Activated CD4-positive, alpha-beta memory T cell treated with anti-CD3 and anti-CD28 coated beads for 36 hours (primary cell): ENCODE measurements at regions of chr5 and their contacts with region 1.

Region 1: DNA sequence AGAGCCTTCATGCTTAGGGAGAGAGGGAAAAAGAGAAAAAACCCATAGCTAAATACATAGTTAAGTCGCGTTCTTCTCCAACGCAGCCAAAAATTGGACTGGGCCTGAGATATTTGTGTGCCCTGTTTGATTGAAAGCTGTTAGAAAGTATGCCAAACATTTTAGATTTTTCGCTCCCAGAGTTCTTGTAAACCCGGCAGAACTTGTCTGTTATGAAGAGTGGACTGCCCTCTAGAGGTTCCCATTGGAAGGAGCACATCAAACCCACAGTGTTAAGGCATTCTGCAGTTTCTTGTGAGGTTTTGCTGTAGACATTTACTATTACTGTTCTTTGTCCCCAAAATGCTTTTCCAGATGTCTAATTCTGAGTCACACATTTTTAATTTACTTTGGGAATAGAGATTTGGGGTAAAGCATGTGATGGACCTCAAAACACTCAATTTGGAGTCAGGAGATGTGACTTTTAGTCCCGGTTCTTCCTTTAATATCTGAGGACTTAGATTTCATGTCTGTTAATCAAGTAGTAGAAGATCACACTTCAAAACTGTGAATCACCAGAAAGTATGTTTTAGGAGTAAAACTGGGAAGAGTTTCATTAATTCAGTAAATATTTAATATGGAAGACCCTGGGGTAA is 96.6 kb downstream of the PCSK1 start:
- DNase-seq: peak; percentile 67
- H3K4me3 Mint-ChIP-seq: no peak overlapping the region
- H3K27ac Mint-ChIP-seq: no peak overlapping the region
- H3K4me1 Mint-ChIP-seq: peaks cover 11% of the 10 kb centered on the region
- H3K27me3 Mint-ChIP-seq: peaks cover 19% of the 10 kb centered on the region

Region 2: DNA sequence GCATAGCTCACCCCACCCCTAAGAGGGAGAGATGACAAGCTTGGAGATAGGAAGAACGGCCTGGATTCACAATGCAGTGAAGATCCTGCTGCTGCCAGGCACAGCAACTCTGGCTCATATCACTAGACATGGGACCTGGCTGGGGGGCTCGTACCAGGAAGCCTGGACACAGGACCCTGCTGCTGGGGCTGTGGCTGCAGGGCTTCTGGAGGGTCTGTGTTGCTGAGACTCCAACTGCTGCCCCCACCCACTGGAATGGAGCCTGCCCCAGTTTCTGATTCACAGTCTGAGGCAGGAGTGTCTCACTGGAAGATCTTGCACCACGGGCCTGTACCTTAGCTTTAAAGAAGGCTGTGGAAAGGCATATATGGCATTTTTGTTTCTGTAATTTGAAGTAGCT is 483.0 kb before region 1 on chr5:
- CTCF ChIA-PET with region 1: interaction called, 63 read pairs
- POLR2A ChIA-PET with region 1: no interaction called
- intact Hi-C with region 1: no loop called
- DNase-seq: no peak
- H3K4me3 Mint-ChIP-seq: no peak overlapping the region
- H3K27ac Mint-ChIP-seq: no peak overlapping the region
- H3K4me1 Mint-ChIP-seq: peaks cover 7% of the 10 kb centered on the region
- H3K27me3 Mint-ChIP-seq: peaks cover 2% of the 10 kb centered on the region

Region 3: GRCh38 chr5:95892780-95893354 is 443.6 kb before region 1 on chr5:
- CTCF ChIA-PET with region 1: interaction called, 6 read pairs
- POLR2A ChIA-PET with region 1: no interaction called
- intact Hi-C with region 1: loop called (anchors 1 kb)
- DNase-seq: peak; percentile 40
- H3K4me3 Mint-ChIP-seq: no peak overlapping the region
- H3K27ac Mint-ChIP-seq: no peak overlapping the region
- H3K4me1 Mint-ChIP-seq: peaks cover 11% of the 10 kb centered on the region
- H3K27me3 Mint-ChIP-seq: no peaks in the 10 kb centered on the region

Region 4: DNA sequence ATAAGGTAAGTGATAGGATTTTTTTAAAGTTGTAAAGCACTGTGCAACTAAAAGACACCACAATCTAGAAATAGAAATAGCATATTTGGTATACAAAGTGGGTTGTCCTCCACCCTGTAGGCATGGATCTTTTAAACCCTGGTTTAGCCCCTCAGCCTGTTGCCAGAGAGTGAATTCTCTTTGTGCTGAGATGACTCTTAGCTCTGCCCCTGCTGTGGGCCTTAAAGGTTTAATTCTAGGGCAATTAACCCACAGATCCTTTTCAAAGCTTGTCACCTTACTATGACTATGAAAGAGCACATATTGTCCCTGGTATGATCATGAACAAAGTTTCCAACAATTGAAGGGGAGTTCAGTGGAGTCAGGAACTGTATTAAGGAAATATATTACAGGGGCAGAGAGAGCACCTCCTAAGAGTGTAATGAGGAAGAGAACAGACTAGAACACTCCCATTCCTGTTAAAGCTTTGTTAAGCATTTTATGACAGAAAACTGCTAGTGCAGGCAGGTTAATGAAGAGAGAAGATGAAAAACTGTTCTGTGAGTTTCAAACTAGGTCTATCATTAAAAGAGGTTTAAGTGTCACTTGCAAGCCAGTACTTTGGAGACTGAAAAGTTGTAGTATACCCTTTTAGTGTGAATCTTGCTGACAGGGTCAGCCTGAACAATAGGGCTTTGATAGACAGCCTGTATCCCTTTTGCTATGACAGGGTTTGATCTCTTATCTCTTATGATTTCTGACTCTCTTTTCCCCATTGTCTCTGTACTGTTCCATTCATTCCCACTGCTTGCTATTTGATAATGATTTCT is 270.7 kb before region 1 on chr5:
- CTCF ChIA-PET with region 1: interaction called, 7 read pairs
- POLR2A ChIA-PET with region 1: no interaction called
- intact Hi-C with region 1: loop called (anchors 2 kb)
- DNase-seq: peak; percentile 38
- H3K4me3 Mint-ChIP-seq: no peak overlapping the region
- H3K27ac Mint-ChIP-seq: peak overlapping the region; percentile 83
- H3K4me1 Mint-ChIP-seq: peaks cover 48% of the 10 kb centered on the region
- H3K27me3 Mint-ChIP-seq: no peaks in the 10 kb centered on the region

Region 5: DNA sequence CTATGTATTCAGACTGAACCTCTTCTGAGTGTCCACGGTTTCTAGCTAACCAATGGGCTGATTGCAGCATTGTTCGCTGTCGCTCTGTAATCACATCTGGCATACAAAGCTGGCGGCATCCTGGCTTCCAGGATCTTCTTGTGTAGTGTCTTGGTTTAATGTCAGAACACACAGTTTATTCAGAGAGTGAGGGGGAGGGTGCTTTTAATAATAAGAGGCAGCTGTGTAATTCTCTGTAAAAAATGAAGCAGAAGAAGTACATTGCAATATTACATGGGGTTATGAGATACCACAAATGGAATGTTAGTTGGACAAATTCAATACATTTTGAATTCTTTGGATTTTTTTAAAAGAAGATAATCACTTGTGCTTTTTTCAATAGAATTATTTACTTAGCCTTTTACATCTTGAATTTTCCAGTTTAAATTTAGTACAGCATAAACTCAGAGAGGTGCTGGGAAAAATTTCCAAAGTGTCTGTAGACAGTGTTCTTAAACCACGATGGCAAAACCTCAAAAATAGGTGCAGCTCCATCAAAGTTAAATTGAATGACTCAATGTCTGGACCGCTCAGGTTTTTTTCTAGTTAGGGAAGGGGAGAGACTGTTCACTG is 109.4 kb before region 1 on chr5:
- CTCF ChIA-PET with region 1: interaction called, 4 read pairs
- POLR2A ChIA-PET with region 1: no interaction called
- intact Hi-C with region 1: loop called (anchors 5 kb)
- DNase-seq: no peak
- H3K4me3 Mint-ChIP-seq: no peak overlapping the region
- H3K27ac Mint-ChIP-seq: no peak overlapping the region
- H3K4me1 Mint-ChIP-seq: peaks cover 10% of the 10 kb centered on the region
- H3K27me3 Mint-ChIP-seq: peaks cover 19% of the 10 kb centered on the region

Region 6: DNA sequence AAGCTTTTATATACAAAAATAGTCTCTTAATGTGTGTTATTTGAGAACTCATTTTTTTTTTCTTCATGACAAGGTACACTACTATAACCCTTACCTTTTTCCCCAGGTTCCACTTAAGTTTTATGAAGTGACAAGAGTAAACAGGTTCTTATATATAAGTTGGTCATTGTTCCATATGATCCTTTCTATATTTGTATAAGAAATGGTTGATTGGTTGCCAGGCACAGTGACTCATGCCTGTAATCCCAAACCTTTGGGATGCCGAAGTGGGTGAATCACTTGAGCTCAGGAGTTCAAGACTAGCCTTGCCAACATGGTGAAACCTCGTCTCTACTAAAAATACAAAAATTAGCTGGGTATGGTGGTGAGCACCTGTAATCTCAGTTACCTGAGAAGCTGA is 11.8 kb before region 1 on chr5:
- CTCF ChIA-PET with region 1: interaction called, 19 read pairs
- POLR2A ChIA-PET with region 1: no interaction called
- intact Hi-C with region 1: no loop called
- DNase-seq: no peak
- H3K4me3 Mint-ChIP-seq: no peak overlapping the region
- H3K27ac Mint-ChIP-seq: no peak overlapping the region
- H3K4me1 Mint-ChIP-seq: no peaks in the 10 kb centered on the region
- H3K27me3 Mint-ChIP-seq: peaks cover 7% of the 10 kb centered on the region